Right cardiac atrium (tissue), 5 donors: ENCODE measurements at regions of chr1 and their contacts with region 1.

Region 1: GRCh38 chr1:248807067-248807737 is 18.5 kb downstream of the SH3BP5L start:
- DNase-seq: peak; percentile 55 to 80 (median 76)
- ATAC-seq: peak; percentile 74 to 76
- H3K4me3 ChIP-seq: no peak overlapping the region
- H3K27ac ChIP-seq: no peak overlapping the region
- H3K4me1 ChIP-seq: peaks cover 8% of the 10 kb centered on the region
- H3K27me3 ChIP-seq: no peaks in the 10 kb centered on the region

Region 2: GRCh38 chr1:248622570-248623001 is 184.6 kb before region 1 on chr1:
- intact Hi-C with region 1: loop called in 3 of 4 experiments (anchors 2 to 5 kb)
- DNase-seq: no peak
- ATAC-seq: no peak
- H3K4me3 ChIP-seq: no peak overlapping the region
- H3K27ac ChIP-seq: no peak overlapping the region
- H3K4me1 ChIP-seq: no peaks in the 10 kb centered on the region
- H3K27me3 ChIP-seq: no peaks in the 10 kb centered on the region